ENCODE measurements at regions of chr18 and their contacts with region 1.

Region 1: DNA sequence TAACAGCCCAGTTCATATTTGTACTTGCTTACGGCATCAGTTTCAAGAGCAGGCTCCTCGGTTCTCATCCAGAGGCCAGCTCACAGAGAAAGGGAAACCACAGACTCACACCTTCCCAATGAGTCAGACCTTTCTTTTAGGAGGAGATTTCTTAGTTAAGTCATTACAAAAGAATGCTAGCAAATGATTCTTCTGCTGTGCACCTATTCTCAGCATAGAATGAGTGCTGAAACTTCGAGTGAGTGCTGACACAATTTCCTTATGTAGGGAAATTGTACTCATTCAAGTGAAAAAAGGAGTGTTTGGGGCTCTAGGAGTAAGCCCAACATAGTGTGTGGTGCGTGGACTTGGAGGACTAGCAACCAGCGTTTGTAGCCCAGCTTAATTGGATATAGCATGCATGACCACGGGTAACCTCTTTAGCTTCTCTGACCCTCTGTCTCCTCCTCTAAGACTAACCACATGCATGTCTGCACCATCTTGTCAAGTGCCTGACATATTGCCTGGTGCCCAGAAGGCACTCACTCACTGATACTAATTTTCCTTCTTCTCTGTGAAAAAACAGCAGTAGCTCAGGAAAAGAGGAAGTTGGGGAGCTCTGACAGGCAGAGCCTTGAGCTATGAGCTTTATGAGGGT is 87.0 kb downstream of the ALPK2 start:
- DNase-seq: peak; percentile 30
- H3K4me3 Mint-ChIP-seq: no peak overlapping the region
- H3K27ac Mint-ChIP-seq: peak overlapping the region; percentile 71
- H3K4me1 Mint-ChIP-seq: peaks cover 58% of the 10 kb centered on the region
- H3K27me3 Mint-ChIP-seq: peaks cover 28% of the 10 kb centered on the region

Region 2: DNA sequence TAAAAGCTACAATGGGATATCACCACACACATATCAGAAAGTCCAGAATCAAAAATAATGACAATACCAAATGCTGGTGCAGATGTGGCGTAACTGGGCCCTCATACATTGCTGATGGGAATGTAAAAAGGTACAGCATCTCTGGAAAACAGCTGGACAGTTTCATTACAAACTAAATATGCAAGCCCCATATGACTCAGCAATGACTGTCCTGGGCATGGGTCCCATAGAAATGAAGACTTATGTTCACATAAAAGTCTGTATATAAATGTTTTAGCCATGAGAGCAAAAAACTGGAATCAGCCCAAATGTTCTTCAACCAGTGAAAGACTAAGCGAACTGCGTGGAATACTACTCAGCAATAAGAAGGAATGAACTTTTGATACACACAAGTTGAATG is 30.3 kb after region 1 on chr18:
- intact Hi-C with region 1: loop called (anchors 1 kb)
- DNase-seq: no peak
- H3K4me3 Mint-ChIP-seq: no peak overlapping the region
- H3K27ac Mint-ChIP-seq: peak overlapping the region; percentile 10
- H3K4me1 Mint-ChIP-seq: peaks cover 20% of the 10 kb centered on the region
- H3K27me3 Mint-ChIP-seq: peaks cover 4% of the 10 kb centered on the region

Region 3: GRCh38 chr18:58639751-58640427 is 98.0 kb after region 1 on chr18:
- intact Hi-C with region 1: no loop called
- DNase-seq: no peak
- H3K4me3 Mint-ChIP-seq: no peak overlapping the region
- H3K27ac Mint-ChIP-seq: no peak overlapping the region
- H3K4me1 Mint-ChIP-seq: peaks cover 24% of the 10 kb centered on the region
- H3K27me3 Mint-ChIP-seq: peaks cover 4% of the 10 kb centered on the region

Region 4: DNA sequence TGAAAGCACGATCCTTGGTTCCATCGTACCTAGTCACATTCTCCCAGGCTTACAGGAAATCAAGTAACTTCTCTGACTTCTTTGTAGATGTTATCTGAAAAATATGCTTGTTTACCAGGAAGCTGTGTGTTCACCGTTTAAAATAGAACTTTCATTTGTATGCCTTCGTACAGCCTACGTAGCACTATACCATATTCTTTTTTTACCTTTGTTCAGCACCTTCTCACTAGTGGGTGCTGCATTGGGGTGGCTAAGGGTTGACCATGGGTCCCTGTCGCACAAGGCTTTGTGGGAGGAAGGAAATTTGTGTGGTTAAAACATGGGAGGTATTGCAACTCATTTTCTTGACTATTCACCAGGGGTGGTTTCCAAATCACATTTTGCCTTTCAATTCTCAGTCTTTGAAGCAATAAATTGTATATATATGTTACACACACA is 146.0 kb after region 1 on chr18:
- intact Hi-C with region 1: loop called (anchors 2 kb)
- DNase-seq: peak; percentile 67
- H3K4me3 Mint-ChIP-seq: peak overlapping the region; percentile 50
- H3K27ac Mint-ChIP-seq: peak overlapping the region; percentile 86
- H3K4me1 Mint-ChIP-seq: peaks cover 34% of the 10 kb centered on the region
- H3K27me3 Mint-ChIP-seq: no peaks in the 10 kb centered on the region